Lower lobe of right lung (tissue), 2 donors: ENCODE measurements at regions of chr1 and their contacts with region 1.

Region 1: GRCh38 chr1:175035865-175036264 is 12.6 kb upstream of the MRPS14 start:
- DNase-seq: no peak
- ATAC-seq: no peak
- H3K4me3 ChIP-seq: no peak overlapping the region
- H3K27ac ChIP-seq: no peak overlapping the region
- H3K4me1 ChIP-seq: no peaks in the 10 kb centered on the region
- H3K27me3 ChIP-seq: no peaks in the 10 kb centered on the region
- CTCF ChIP-seq: no peak

Region 2: DNA sequence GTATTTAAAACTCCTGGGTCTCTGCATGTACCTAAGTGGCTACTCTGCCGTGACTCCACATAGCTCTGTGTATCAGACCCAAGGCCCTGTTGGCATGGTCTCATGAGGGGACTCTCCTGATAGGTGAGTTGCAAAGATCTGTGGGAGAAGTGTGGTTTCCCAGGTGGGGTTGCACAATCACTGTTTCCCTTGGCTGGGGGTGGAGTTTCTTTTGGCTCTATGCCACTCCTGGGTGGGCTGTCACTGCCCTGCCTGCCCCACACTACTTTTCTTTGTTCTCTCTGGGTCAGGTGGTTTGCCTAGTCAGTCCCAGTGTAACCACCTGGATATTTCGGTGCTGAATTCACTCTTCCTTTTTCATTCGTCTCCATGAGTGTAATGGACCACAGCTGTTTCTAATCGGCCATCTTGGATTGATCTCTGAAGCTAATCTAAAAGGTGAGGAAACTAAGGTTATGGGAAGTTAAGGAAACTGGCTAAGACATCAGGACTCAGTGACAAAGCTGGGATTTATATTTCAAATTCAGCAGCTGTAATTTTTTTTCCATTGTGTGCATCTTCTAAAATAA is 133.2 kb before region 1 on chr1:
- intact Hi-C with region 1: no loop called
- DNase-seq: no peak
- ATAC-seq: peak; percentile 12 to 47
- H3K4me3 ChIP-seq: no peak overlapping the region
- H3K27ac ChIP-seq: no peak overlapping the region
- H3K4me1 ChIP-seq: no peaks in the 10 kb centered on the region
- H3K27me3 ChIP-seq: no peaks in the 10 kb centered on the region
- CTCF ChIP-seq: no peak

Region 3: DNA sequence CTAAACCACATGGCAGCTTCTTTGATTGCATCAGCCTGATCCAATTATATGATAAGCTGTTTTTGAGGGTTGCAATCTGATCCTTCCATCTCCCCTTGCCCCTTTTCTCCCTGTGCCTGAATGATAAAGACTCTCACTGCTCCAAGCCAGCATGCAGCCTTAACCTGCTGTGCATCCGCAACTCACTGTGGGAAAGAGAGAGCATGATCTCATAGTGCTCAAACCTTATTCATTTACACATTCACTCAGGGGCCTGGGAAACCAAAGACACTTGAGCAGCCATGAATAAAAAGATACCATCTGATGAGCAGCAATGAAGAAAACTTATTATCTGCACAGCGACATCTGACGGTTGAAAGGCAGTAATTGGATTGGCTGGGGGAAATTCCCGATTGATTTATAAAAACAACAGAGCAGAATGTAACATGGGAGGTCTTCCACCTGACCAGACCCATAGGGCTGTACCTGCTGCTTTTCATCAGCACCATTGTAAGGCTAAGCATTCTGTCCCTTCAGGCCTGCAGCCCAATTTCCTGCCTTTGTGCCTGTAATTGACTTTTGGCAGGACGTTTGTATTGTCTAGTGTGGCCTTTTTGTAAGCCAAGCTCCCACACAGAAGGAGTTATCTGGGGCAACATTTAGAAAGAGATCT is 94.3 kb after region 1 on chr1:
- intact Hi-C with region 1: loop called (anchors 10 kb)
- DNase-seq: no peak
- ATAC-seq: no peak
- H3K4me3 ChIP-seq: no peak overlapping the region
- H3K27ac ChIP-seq: peak overlapping the region; percentile 64
- H3K4me1 ChIP-seq: peaks cover 35% of the 10 kb centered on the region
- H3K27me3 ChIP-seq: no peaks in the 10 kb centered on the region
- CTCF ChIP-seq: peak; percentile 8

Region 4: DNA sequence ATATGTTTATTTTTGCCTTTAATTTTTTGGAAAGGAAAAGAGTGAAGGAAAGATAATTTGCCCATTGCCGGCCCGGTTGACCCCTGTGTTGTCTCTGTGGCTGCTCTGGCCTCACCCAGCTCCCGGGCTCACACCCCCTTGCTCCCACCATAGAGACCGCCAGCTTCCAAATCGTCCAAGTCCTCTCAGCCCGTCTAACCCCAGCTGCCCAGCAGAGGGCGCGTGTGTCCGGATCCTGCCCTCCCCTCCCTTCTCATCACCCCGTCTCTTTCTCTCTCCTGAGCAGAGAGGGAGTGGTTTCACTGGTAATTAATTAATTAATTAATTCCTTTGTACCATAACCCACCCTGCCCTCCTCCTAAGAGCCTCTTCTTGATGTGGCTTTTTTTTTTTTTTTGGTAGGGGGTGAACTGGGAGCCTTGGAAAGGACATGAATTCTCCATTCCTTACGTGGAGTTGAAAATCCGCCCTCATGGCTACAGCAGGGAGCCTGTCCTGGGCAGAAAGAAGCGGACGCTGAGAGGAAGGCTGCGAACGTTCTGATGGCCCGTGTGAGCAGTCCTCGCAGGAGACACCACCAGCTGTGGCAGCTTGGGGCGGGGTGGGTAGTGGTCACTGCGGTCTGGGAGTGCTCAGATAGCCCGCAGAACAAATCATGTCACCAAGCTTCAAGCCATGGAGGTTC is 110.8 kb after region 1 on chr1:
- intact Hi-C with region 1: no loop called
- DNase-seq: peak; percentile 77
- ATAC-seq: peak; percentile 86 to 87
- H3K4me3 ChIP-seq: no peak overlapping the region
- H3K27ac ChIP-seq: no peak overlapping the region
- H3K4me1 ChIP-seq: no peaks in the 10 kb centered on the region
- H3K27me3 ChIP-seq: no peaks in the 10 kb centered on the region
- CTCF ChIP-seq: peak; percentile 84

Region 5: DNA sequence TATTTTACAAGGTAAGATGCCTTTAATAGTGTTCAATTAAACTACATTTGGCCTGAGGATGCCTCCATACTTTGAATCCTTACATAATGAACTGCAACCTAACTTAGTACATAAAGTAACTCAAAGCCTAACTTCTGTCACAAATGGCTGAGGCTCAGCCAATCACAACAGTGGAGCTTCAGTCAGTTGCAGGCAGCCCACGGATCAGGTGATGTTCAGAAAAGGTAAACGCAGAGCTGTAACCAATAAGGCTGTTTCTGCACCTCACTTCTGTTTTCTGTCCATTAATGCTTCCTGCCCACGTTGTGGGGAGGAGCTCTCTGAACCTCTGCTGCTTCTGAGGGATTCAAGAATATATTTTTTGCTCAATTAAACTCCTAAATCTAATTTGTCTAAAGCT is 251.5 kb after region 1 on chr1:
- intact Hi-C with region 1: no loop called
- DNase-seq: no peak
- ATAC-seq: no peak
- H3K4me3 ChIP-seq: no peak overlapping the region
- H3K27ac ChIP-seq: peak overlapping the region; percentile 25
- H3K4me1 ChIP-seq: no peaks in the 10 kb centered on the region
- H3K27me3 ChIP-seq: no peaks in the 10 kb centered on the region
- CTCF ChIP-seq: no peak